Aorta (tissue), 5 donors: ENCODE measurements at regions of chr3 and their contacts with region 1.

Region 1: GRCh38 chr3:38834717-38835116 is 18.7 kb upstream of the SCN10A start:
- DNase-seq: no peak
- ATAC-seq: no peak
- H3K4me3 ChIP-seq: no peak overlapping the region
- H3K27ac ChIP-seq: peak overlapping the region in 1 of 2 donors; percentile 2
- H3K4me1 ChIP-seq: no peaks in the 10 kb centered on the region
- H3K27me3 ChIP-seq: no peaks in the 10 kb centered on the region

Region 2: DNA sequence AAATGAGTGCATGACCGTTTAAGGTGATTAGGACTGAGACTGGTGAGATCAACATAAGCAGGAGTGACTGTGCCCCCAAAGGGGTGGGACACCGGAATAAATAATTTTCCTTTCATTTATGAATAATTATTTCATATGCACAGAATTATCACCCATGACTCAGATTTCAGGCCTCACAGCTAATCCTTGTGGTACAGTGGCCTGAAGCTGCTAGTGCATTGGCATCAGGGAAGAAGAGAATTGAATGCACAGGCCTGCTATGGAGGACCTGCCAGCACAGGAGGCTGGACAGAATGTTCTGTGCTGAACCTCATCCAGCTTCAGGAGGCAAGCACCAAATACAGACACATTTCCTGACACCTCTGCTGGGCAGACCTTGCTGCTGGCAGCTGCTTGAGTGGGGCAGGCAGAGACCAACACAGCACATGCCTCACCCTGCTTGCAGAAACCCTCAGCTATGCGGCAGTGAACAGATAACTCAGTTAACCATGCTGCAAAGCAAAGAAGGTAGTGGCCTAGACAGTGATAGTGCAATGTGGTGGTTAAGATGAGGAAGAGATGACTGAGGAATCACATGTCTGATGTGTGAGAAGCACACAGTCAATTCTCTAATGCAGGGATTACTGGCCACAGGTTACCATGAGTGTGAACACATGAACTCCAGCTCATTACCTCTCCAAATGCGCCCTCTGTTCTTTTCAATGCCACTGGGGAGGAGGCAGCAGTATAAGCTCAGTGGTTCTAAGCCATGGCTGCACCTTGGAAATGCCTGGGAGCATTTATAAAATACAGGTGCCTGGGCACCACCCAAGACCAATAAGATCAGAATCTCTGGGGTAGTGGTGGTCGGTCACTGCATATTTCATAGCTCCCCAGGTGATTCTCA is 117.1 kb before region 1 on chr3:
- intact Hi-C with region 1: loop called in 1 of 2 experiments (anchors 5 kb)
- DNase-seq: no peak
- ATAC-seq: no peak
- H3K4me3 ChIP-seq: no peak overlapping the region
- H3K27ac ChIP-seq: peak overlapping the region in 1 of 2 donors; percentile 32
- H3K4me1 ChIP-seq: peaks cover 4 to 7% of the 10 kb centered on the region in 2 donors
- H3K27me3 ChIP-seq: no peaks in the 10 kb centered on the region